Transverse colon (tissue), 4 donors: ENCODE measurements at regions of chr10 and their contacts with region 1.

Region 1: GRCh38 chr10:124530215-124530665 is 68.6 kb downstream of the LHPP start:
- DNase-seq: peak; percentile 91
- H3K4me3 ChIP-seq: no peak overlapping the region
- H3K27ac ChIP-seq: no peak overlapping the region
- H3K4me1 ChIP-seq: peaks cover 0 to 17% (median 6%) of the 10 kb centered on the region in 4 donors
- H3K27me3 ChIP-seq: no peaks in the 10 kb centered on the region
- CTCF ChIP-seq: peak; percentile 83 to 93 (median 87)
- EP300 ChIP-seq: no peak
- POLR2A ChIP-seq: no peak

Region 2: GRCh38 chr10:124626759-124627380 is 96.6 kb after region 1 on chr10:
- in situ Hi-C with region 1: no loop called
- intact Hi-C with region 1: loop called (anchors 10 kb)
- DNase-seq: peak; percentile 83
- H3K4me3 ChIP-seq: no peak overlapping the region
- H3K27ac ChIP-seq: peak overlapping the region; percentile 52 to 69 (median 62)
- H3K4me1 ChIP-seq: peaks cover 25 to 36% (median 30%) of the 10 kb centered on the region in 4 donors
- H3K27me3 ChIP-seq: no peaks in the 10 kb centered on the region
- CTCF ChIP-seq: peak in 1 of 5 experiments; percentile 15
- EP300 ChIP-seq: no peak
- POLR2A ChIP-seq: no peak

Region 3: DNA sequence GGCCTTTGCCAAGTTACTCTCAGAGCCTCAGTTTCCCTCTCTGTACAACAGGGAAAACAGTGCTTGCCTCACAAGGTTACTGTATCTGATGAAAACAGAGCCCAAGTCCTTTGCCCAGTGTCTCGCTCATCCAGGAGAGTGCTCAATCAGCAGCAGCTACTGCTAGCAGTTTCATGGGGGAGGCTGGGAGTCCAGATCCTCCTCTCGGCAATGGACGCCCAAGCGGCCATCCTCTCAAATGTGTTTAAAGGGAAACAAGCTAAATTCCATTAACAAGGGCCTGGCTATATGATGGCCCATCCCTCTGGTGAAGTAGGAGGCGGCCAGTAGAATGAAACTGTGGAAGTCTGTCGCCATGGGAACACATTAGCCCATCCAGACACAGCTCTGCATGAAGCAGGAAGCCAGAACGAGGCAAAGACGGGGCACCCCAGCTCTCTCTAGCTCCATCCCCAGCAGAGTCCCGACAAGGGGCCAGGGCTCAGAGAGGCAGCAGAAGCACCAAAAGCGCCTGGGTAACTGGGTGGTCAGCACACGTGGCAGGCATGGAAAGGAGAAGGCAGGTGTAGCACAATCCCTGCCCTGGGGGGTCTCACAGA is 178.8 kb after region 1 on chr10:
- in situ Hi-C with region 1: no loop called
- intact Hi-C with region 1: no loop called
- DNase-seq: no peak
- H3K4me3 ChIP-seq: no peak overlapping the region
- H3K27ac ChIP-seq: peak overlapping the region; percentile 76 to 81 (median 79)
- H3K4me1 ChIP-seq: peaks cover 57 to 82% (median 62%) of the 10 kb centered on the region in 4 donors
- H3K27me3 ChIP-seq: no peaks in the 10 kb centered on the region
- CTCF ChIP-seq: no peak
- EP300 ChIP-seq: no peak
- POLR2A ChIP-seq: no peak

Region 4: DNA sequence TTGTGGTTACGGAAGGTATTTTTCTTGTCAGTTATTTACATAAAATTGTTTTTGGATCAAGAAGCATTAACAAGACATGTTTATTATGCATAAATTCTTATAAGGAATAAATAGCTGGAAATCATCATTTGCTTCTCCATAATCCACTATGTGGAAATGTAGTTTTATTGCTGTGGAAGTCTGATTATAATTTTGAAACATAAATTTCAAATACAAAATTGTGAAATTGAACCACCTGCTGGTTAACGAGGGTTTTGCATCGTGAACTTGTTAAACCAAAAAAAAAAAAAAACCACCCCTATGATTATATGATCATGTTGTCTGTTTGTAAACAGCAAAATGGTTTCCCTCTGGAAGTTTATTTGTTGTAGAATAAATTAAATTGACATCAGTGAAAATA is 297.2 kb after region 1 on chr10:
- in situ Hi-C with region 1: loop called in 2 of 4 experiments (anchors 25 kb)
- intact Hi-C with region 1: loop called (anchors 10 kb)
- DNase-seq: no peak
- H3K4me3 ChIP-seq: no peak overlapping the region
- H3K27ac ChIP-seq: no peak overlapping the region
- H3K4me1 ChIP-seq: no peaks in the 10 kb centered on the region
- H3K27me3 ChIP-seq: no peaks in the 10 kb centered on the region
- CTCF ChIP-seq: peak; percentile 50 to 67 (median 57)
- EP300 ChIP-seq: no peak
- POLR2A ChIP-seq: no peak